Calu3 (cell line): ENCODE measurements at regions of chr11 and their contacts with region 1.

Region 1: GRCh38 chr11:62753736-62754603 is at the start of gene ZBTB3:
- DNase-seq: peak; percentile 96
- H3K4me3 Mint-ChIP-seq: peak within 1 kb of the TSS; percentile 92
- H3K27ac Mint-ChIP-seq: peak within 1 kb of the TSS; percentile 93
- H3K4me1 Mint-ChIP-seq: no peaks in the 10 kb centered on the region
- H3K27me3 Mint-ChIP-seq: no peaks in the 10 kb centered on the region
- CTCF ChIP-seq: no peak
- total RNA-seq, gene ZBTB3: 9.7 and 10.6 TPM in 2 replicates

Region 2: DNA sequence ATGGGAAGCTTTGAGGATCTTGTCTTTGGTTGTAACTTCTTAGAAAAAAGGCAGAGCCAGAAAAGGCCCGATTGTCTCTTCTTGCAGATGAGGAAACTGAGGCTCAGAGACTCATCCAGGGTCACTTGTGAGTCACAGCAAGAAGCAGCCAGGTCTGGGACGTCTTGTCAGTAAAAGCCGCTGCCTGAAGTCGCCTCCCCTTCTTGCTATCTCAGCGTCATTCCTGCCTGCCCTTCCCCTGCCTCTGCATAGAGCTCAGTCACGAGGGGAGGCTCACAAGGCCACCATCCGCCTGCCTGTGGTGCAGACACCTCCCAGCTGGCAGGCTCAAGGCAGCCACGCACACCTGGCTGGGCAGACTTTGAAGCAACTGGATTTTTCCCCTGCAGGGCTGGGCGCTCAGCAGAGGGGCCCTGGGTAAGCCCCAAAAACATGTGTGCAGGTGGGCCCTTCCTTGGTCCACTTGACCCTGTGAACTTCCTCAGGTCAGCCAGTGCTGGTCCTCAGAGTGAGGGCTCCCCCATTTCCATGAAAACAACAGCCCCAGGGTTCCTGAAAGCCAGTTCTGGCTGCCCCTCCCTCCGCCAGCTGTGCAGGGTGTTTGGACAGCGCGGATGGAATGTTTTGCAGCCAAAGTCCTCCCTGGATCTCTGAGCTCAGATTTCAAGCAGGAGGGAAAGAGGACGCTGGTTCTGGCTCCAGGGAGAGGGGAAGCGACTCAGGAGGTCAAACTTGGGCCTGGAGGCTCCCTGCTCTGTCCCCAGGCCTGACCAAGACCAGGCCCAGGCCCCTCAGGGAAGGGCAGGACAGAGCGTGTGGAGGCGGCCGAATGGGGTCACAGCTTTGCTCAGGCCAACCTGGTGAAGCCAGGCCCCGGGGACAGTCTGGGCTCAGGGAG is 830.6 kb before region 1 on chr11:
- CTCF ChIA-PET with region 1: no interaction called
- intact Hi-C with region 1: no loop called
- DNase-seq: no peak
- H3K4me3 Mint-ChIP-seq: no peak overlapping the region
- H3K27ac Mint-ChIP-seq: no peak overlapping the region
- H3K4me1 Mint-ChIP-seq: peaks cover 8% of the 10 kb centered on the region
- H3K27me3 Mint-ChIP-seq: peaks cover 96% of the 10 kb centered on the region
- CTCF ChIP-seq: no peak

Region 3: GRCh38 chr11:62771144-62772021 is 17.4 kb after region 1 on chr11 and contains the start of gene TAF6L:
- CTCF ChIA-PET with region 1: interaction called, 10 read pairs
- intact Hi-C with region 1: no loop called
- DNase-seq: peak; percentile 92
- H3K4me3 Mint-ChIP-seq: peak within 1 kb of the TSS; percentile 98
- H3K27ac Mint-ChIP-seq: peak within 1 kb of the TSS; percentile 99
- H3K4me1 Mint-ChIP-seq: peaks cover 14% of the 10 kb centered on the region
- H3K27me3 Mint-ChIP-seq: no peaks in the 10 kb centered on the region
- CTCF ChIP-seq: no peak
- total RNA-seq, gene TAF6L: 26.0 and 28.9 TPM in 2 replicates